GM10248 (cell line): ENCODE measurements at regions of chr18 and their contacts with region 1.

Region 1: DNA sequence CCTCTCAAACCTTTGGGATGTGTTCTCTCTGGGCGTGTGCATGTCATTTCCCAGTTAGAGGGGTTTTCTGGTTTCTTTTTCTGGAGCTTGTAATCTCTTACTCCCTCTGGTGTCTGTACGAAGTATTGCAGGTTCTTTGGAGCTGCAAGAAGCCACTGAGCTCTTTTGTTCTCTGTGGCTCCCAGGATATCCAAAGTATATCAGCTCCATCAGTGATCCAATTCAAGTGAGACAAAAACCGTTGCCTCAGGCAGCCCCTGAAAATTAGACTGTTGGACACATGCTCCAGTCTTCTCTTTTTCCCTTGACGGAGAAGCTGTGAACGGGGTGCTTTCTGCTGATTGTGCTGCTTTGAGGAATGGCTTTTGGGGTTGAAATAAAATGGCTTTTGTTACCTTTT is 59.0 kb upstream of the LDLRAD4 start:
- DNase-seq: peak; percentile 78
- CTCF ChIP-seq: peak; percentile 62

Region 2: DNA sequence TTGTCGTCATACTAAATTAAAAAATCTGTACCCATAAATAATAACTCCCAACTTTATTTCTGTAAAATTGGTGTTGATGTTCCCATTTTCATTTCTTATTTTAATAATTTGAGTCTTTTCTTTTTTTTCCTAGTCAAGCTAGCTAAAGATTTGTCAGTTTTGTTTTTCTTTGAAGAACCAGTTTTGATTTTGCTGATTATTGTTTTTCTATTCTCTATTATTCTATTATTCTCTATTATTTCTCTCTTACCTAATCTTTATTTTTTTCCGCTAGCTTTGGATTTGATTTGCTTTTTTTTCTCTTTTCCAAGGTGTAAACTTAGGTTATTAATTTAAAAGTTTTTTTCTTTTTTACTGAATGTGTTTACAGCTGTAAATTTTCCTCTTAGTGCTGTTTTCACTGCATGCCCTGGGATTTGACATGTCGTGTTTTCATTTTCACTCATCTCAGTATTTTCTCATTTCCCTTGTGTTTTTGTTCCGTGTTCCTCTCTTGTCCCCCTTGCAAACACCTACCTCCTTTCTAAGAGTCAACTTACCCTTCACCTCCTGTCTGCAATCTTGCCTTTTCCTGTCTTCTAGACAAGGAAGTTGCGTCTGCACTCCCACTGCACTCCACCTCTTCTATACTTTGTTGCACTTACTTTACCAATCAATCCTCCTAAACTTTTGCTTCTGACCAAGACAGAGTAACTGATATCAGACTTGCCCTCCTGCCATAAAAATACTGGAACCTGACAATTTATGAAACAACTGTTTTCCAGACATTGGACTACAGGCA is 437.9 kb before region 1 on chr18:
- CTCF ChIA-PET with region 1: interaction called, 14 read pairs
- POLR2A ChIA-PET with region 1: no interaction called
- DNase-seq: no peak
- CTCF ChIP-seq: no peak

Region 3: GRCh38 chr18:13124411-13124810 is 35.2 kb before region 1 on chr18:
- CTCF ChIA-PET with region 1: interaction called, 12 read pairs
- POLR2A ChIA-PET with region 1: no interaction called
- DNase-seq: no peak
- CTCF ChIP-seq: no peak

Region 4: DNA sequence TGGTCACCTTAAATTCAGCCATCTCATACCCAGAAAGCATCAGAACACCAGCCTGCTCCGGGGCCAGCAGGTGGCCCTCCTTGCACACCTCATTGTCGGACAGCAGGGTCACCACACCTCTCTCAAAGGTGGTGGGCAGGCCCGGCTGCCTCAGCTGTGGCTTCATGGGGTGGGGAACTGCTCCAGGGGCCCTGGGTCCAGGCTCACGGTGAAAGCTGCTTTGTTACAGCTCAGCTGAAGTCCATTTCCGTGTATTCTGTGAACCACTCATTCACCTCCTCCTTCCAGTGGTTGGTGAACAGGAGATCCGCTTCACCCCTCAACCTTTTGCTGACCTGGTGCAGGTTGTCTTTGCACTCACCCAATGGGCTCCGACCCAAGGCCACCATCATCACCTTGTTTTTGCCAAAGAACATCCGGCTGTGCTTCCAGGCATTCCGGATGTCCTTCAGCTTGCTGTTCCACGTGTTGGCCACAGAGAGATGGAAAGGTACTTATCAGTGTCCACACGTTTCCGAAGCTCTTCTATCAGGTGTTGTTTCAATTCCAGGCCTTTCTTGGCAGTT is 19.6 kb before region 1 on chr18:
- CTCF ChIA-PET with region 1: interaction called, 15 read pairs
- POLR2A ChIA-PET with region 1: no interaction called
- DNase-seq: no peak
- CTCF ChIP-seq: peak; percentile 21

Region 5: GRCh38 chr18:13178976-13179375 is 19.4 kb after region 1 on chr18:
- CTCF ChIA-PET with region 1: interaction called, 15 read pairs
- POLR2A ChIA-PET with region 1: no interaction called
- DNase-seq: no peak
- CTCF ChIP-seq: no peak